Left cardiac atrium (tissue), 4 donors: ENCODE measurements at regions of chr4 and their contacts with region 1.

Region 1: GRCh38 chr4:16289897-16290554 is 63.8 kb upstream of the TAPT1 start:
- DNase-seq: no peak
- ATAC-seq: no peak

Region 2: DNA sequence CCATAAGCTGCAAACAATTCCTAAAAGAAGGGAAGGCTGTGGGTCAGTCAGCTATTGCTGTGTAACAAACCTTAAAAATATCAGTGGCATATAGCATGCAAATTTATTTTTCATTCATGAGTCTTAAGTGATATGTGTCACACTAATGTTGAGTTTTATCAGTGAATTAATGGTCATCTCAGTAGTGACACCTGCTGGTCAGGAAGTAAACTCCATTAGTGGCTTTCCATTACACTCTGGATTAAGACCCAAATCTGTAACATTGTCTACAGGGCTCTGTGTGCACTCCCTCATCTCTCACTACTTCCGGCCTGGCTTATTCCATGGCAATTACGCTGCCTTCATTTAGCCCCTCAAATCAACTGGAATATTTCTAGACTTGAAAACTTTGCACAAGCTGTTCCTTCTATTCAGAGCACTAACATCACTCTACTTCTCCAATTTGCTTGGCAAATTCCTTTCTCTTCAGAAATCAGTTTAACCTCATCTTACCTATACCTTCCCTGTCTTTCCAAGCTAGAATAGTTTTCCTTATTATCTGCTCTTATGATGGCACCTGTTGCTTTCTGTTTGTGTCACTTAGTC is 153.6 kb after region 1 on chr4:
- intact Hi-C with region 1: loop called (anchors 5 to 10 kb)
- DNase-seq: no peak
- ATAC-seq: no peak

Region 3: DNA sequence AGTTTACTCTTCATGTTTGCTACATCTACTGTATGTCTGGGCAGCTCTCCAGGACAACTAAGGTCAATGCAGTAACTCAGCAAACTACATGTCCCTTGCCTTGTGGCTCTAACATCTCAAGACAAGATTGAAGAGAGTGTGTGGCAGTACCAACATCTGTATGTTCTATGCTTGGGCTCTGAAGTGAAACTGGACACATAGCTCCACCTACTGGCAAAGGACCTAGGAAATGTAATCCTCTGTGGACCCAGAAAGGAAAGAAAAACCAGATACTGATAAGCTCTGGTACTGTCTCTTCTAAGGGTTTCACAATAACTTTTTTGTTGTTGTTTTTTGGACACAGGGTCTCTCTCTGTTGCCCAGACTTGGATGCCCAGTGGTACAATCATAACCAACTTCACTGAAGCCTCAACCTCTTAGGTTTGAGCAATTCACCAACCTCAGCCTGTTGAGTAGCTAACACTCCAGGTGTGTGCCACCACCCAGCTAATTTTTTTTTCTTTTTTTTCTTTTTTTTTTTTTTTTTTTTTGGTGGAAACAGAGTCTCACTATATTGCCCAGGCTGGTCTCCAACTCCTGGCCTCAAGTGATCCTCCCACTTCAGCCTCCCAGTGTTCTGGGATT is 1157.8 kb after region 1 on chr4:
- intact Hi-C with region 1: loop called in 1 of 2 experiments (anchors 5 kb)
- DNase-seq: no peak
- ATAC-seq: peak; percentile 89 to 95

Region 4: DNA sequence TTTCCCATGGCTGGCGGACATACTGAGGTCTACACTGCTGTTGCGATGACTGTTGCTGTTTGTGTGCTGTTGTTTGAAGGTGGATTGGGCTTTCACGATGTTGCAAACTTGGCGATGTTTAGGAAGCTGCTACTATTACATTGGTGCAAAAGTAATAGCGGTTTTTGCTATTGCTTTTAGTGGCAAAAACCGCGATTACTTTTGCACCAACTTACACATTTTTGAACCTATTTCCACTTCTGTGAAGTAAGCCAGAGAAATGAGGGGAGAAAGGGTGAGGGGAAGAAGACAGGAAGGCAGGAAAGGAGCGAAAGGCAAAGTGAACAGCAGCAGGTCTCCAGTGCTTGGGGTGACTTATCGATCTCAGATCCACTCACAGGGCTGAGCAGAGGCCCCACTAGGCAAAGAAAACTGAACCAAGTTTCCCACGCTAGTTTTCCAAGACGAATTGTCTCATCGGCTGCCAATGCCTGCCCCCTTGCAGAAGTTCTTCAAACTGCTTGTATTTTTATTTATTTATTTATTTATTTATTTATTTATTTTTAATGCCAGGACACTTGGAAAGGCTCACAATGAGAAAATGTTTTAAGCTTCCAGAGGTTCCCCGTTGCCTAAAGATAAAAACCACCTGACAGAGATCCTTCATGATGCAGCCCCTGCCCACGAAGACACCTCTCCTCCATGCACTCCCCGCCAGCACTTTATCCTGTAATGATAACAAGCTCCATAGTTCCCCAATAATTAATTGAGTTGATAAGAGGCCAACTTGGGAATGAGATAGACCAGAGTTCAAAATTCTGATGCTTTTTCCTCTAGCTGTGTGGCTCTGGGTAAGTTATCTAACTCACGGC is 1178.6 kb after region 1 on chr4:
- intact Hi-C with region 1: loop called in 1 of 2 experiments (anchors 5 kb)
- DNase-seq: no peak
- ATAC-seq: no peak